ENCODE measurements at regions of chr1 and their contacts with region 1.

Region 1: GRCh38 chr1:193059268-193060225 is at the starts of genes RO60 and UCHL5:
- DNase-seq: peak; percentile 96
- H3K4me3 Mint-ChIP-seq: peak within 1 kb of the TSS; percentile 100
- H3K27ac Mint-ChIP-seq: peak within 1 kb of the TSS; percentile 100
- H3K4me1 Mint-ChIP-seq: peaks cover 54% of the 10 kb centered on the region
- H3K27me3 Mint-ChIP-seq: no peaks in the 10 kb centered on the region
- total RNA-seq, gene RO60: 64.4 to 67.5 TPM
- total RNA-seq, gene UCHL5: 44.8 to 45.4 TPM

Region 2: GRCh38 chr1:192763746-192764145 is 295.8 kb before region 1 on chr1:
- CTCF ChIA-PET with region 1: no interaction called
- POLR2A ChIA-PET with region 1: no interaction called
- DNase-seq: no peak
- H3K4me3 Mint-ChIP-seq: no peak overlapping the region
- H3K27ac Mint-ChIP-seq: no peak overlapping the region
- H3K4me1 Mint-ChIP-seq: peaks cover 12% of the 10 kb centered on the region
- H3K27me3 Mint-ChIP-seq: peaks cover 12% of the 10 kb centered on the region

Region 3: GRCh38 chr1:192808518-192809306 is 250.8 kb before region 1 on chr1 and contains the start of gene RGS2:
- CTCF ChIA-PET with region 1: interaction called, 12 read pairs
- POLR2A ChIA-PET with region 1: interaction called, 65 read pairs
- DNase-seq: peak; percentile 89
- H3K4me3 Mint-ChIP-seq: peak within 1 kb of the TSS; percentile 98
- H3K27ac Mint-ChIP-seq: peak within 1 kb of the TSS; percentile 83
- H3K4me1 Mint-ChIP-seq: peaks cover 39% of the 10 kb centered on the region
- H3K27me3 Mint-ChIP-seq: peaks cover 7% of the 10 kb centered on the region
- total RNA-seq, gene RGS2: 8.0 to 8.2 TPM

Region 4: GRCh38 chr1:192983349-192983980 is 76.1 kb before region 1 on chr1:
- CTCF ChIA-PET with region 1: no interaction called
- POLR2A ChIA-PET with region 1: no interaction called
- DNase-seq: peak; percentile 35
- H3K4me3 Mint-ChIP-seq: no peak overlapping the region
- H3K27ac Mint-ChIP-seq: no peak overlapping the region
- H3K4me1 Mint-ChIP-seq: peaks cover 32% of the 10 kb centered on the region
- H3K27me3 Mint-ChIP-seq: no peaks in the 10 kb centered on the region

Region 5: GRCh38 chr1:193042766-193043691 is 16.5 kb before region 1 on chr1:
- CTCF ChIA-PET with region 1: interaction called, 4 read pairs
- POLR2A ChIA-PET with region 1: interaction called, 14 read pairs
- DNase-seq: no peak
- H3K4me3 Mint-ChIP-seq: no peak overlapping the region
- H3K27ac Mint-ChIP-seq: no peak overlapping the region
- H3K4me1 Mint-ChIP-seq: peaks cover 3% of the 10 kb centered on the region
- H3K27me3 Mint-ChIP-seq: no peaks in the 10 kb centered on the region

Region 6: GRCh38 chr1:193069748-193070385 is 10.3 kb after region 1 on chr1:
- CTCF ChIA-PET with region 1: interaction called, 22 read pairs
- POLR2A ChIA-PET with region 1: interaction called, 37 read pairs
- DNase-seq: no peak
- H3K4me3 Mint-ChIP-seq: no peak overlapping the region
- H3K27ac Mint-ChIP-seq: peak overlapping the region; percentile 44
- H3K4me1 Mint-ChIP-seq: peaks cover 40% of the 10 kb centered on the region
- H3K27me3 Mint-ChIP-seq: no peaks in the 10 kb centered on the region

Region 7: GRCh38 chr1:193104906-193105820 is 45.6 kb after region 1 on chr1 and contains the start of gene GLRX2:
- CTCF ChIA-PET with region 1: interaction called, 4 read pairs
- POLR2A ChIA-PET with region 1: interaction called, 42 read pairs
- DNase-seq: peak; percentile 62
- H3K4me3 Mint-ChIP-seq: peak within 1 kb of the TSS; percentile 92
- H3K27ac Mint-ChIP-seq: peak within 1 kb of the TSS; percentile 68
- H3K4me1 Mint-ChIP-seq: peaks cover 20% of the 10 kb centered on the region
- H3K27me3 Mint-ChIP-seq: no peaks in the 10 kb centered on the region
- total RNA-seq, gene GLRX2: 16.1 to 18.0 TPM

Region 8: GRCh38 chr1:193121616-193122593 is 62.4 kb after region 1 on chr1 and contains the start of gene CDC73:
- CTCF ChIA-PET with region 1: interaction called, 28 read pairs
- POLR2A ChIA-PET with region 1: interaction called, 16 read pairs
- DNase-seq: peak; percentile 98
- H3K4me3 Mint-ChIP-seq: peak within 1 kb of the TSS; percentile 88
- H3K27ac Mint-ChIP-seq: peak within 1 kb of the TSS; percentile 90
- H3K4me1 Mint-ChIP-seq: peaks cover 59% of the 10 kb centered on the region
- H3K27me3 Mint-ChIP-seq: peaks cover 2% of the 10 kb centered on the region
- total RNA-seq, gene CDC73: 62.0 to 64.9 TPM